ENCODE measurements at regions of chr5 and their contacts with region 1.

Region 1: GRCh38 chr5:82641331-82642003 is 363.3 kb upstream of the RPS23 start:
- DNase-seq: peak; percentile 51 to 66
- ATAC-seq: peak; percentile 90 to 98 (median 96)
- H3K4me3 ChIP-seq: no peak overlapping the region
- H3K27ac ChIP-seq: no peak overlapping the region
- H3K4me1 ChIP-seq: peaks cover 15% of the 10 kb centered on the region
- H3K27me3 ChIP-seq: no peaks in the 10 kb centered on the region
- CTCF ChIP-seq: peak; percentile 72

Region 2: DNA sequence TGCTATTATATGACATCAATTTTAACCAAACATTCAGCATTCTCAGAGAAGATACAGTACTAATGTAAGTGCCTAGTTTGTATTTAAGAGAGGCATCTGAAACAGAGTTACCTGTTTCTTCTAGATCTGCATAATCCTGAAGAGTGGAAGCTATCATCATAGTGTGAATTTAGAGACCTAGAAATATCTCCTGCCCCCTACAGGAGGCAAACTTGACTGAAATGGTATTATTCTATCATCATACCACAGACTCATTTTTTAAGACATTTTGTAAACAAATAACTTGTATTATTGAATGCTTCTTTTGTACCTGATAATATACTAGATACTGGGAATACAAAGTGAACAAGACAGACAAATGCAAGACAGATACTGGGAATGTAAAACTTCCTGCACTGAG is 146.5 kb before region 1 on chr5:
- intact Hi-C with region 1: no loop called
- DNase-seq: no peak
- ATAC-seq: no peak
- H3K4me3 ChIP-seq: no peak overlapping the region
- H3K27ac ChIP-seq: no peak overlapping the region
- H3K4me1 ChIP-seq: no peaks in the 10 kb centered on the region
- H3K27me3 ChIP-seq: peaks cover 0 to 2% (median 0%) of the 10 kb centered on the region in 3 donors
- CTCF ChIP-seq: no peak

Region 3: GRCh38 chr5:82754759-82755158 is 113.3 kb after region 1 on chr5:
- intact Hi-C with region 1: no loop called
- DNase-seq: no peak
- ATAC-seq: no peak
- H3K4me3 ChIP-seq: no peak overlapping the region
- H3K27ac ChIP-seq: no peak overlapping the region
- H3K4me1 ChIP-seq: no peaks in the 10 kb centered on the region
- H3K27me3 ChIP-seq: no peaks in the 10 kb centered on the region
- CTCF ChIP-seq: no peak

Region 4: GRCh38 chr5:82793808-82794419 is 152.4 kb after region 1 on chr5:
- intact Hi-C with region 1: loop called in 1 of 2 experiments (anchors 5 kb)
- DNase-seq: no peak
- ATAC-seq: no peak
- H3K4me3 ChIP-seq: no peak overlapping the region
- H3K27ac ChIP-seq: no peak overlapping the region
- H3K4me1 ChIP-seq: no peaks in the 10 kb centered on the region
- H3K27me3 ChIP-seq: no peaks in the 10 kb centered on the region
- CTCF ChIP-seq: peak; percentile 54

Region 5: DNA sequence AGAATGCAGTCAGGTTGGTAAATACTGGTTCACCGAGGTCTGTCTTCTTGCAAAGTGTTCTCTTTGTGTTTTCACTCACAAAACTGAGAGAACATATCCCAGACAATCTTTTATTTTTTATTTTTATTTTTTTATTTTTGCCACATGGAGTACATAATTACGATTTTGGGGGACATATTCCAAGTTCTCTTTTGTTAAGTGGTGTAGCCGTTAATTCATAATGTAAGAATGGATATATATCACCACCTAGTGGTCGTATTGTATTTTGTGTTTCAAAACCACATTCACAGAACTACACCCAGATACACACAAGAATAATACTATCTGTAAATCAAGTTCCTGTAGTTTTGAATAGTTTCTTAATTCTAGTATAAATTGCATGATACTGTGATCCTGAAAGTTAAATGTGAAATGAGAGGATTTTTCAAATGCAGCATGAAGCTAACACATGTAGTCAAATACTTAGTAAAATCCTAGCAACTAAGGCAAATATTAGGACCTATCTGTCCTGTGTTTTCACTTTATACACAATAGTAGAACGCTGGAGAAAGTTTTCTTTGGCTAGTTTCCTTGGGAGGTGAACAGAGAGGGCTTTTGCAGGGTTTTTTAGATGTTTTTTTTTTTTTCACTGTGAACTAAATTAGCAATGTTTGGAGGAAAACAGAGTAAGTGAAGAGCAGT is 922.7 kb after region 1 on chr5:
- intact Hi-C with region 1: loop called in 1 of 2 experiments (anchors 10 kb)
- DNase-seq: no peak
- ATAC-seq: peak in 2 of 4 donors; percentile 52 to 73
- H3K4me3 ChIP-seq: no peak overlapping the region
- H3K27ac ChIP-seq: no peak overlapping the region
- H3K4me1 ChIP-seq: no peaks in the 10 kb centered on the region
- H3K27me3 ChIP-seq: no peaks in the 10 kb centered on the region
- CTCF ChIP-seq: peak; percentile 69

Measured in psoas muscle (tissue), 8 donors.